GM12878 (cell line): ENCODE measurements at regions of chr2 and their contacts with region 1.

Region 1: DNA sequence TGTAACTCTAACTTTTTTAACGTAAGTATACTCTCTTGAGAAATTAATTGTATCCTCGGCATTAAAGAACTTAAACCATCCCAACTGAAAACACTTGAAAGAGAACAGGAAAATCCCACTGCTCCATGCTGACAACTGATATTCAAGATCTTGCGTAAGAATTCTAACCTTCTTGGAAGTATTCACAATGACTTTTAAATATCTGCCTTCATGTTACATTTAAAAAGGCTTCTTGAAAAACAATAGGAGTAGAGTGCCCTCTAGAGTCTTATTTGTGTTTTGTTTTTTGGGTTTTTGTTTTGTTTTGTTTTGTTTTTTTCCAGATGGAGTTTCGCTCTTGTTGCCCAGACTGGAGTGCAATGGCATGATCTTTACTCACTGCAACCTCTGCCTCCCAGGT is 65.4 kb upstream of the DNAJC10 start:
- DNase-seq: no peak
- ATAC-seq: peak; percentile 30
- H3K4me3 ChIP-seq: no peak overlapping the region
- H3K27ac ChIP-seq: no peak overlapping the region
- H3K4me1 ChIP-seq: no peaks in the 10 kb centered on the region
- H3K27me3 ChIP-seq: no peaks in the 10 kb centered on the region; a peak in 1 of 4 replicates
- CTCF ChIP-seq: peak; percentile 30 to 44 (median 43); a peak in 5 of 6 replicates
- EP300 ChIP-seq: no peak
- POLR2A ChIP-seq: no peak
- RAD21 ChIP-seq: peak; percentile 61

Region 2: DNA sequence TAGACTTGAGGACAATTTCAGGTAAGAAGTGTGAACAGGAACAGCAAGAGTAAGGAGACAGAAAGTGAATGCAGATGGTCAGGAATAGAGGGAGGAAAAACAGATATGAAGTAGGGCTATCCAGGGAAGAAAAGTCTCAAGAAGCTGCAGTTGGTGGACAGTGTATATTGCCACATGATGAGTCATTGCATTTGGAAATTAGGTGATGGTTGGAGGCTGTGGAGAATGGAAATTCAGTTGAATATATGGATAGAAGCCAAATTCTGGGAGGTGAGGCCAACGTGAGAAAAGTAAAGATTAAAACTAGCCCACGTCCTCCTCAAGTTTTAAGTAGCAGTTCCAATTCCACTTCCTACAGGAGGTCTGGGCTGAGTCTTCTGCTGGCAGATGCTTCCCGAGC is 1511.9 kb before region 1 on chr2:
- CTCF ChIA-PET with region 1: no interaction called
- POLR2A ChIA-PET with region 1: no interaction called
- RAD21 ChIA-PET with region 1: no interaction called
- SMC1A ChIA-PET with region 1: no interaction called
- in situ Hi-C with region 1: no loop called
- intact Hi-C with region 1: no loop called
- DNase-seq: no peak
- ATAC-seq: no peak
- H3K4me3 ChIP-seq: no peak overlapping the region
- H3K27ac ChIP-seq: no peak overlapping the region
- H3K4me1 ChIP-seq: no peaks in the 10 kb centered on the region
- H3K27me3 ChIP-seq: no peaks in the 10 kb centered on the region
- CTCF ChIP-seq: no peak
- EP300 ChIP-seq: no peak
- POLR2A ChIP-seq: no peak
- RAD21 ChIP-seq: no peak

Region 3: DNA sequence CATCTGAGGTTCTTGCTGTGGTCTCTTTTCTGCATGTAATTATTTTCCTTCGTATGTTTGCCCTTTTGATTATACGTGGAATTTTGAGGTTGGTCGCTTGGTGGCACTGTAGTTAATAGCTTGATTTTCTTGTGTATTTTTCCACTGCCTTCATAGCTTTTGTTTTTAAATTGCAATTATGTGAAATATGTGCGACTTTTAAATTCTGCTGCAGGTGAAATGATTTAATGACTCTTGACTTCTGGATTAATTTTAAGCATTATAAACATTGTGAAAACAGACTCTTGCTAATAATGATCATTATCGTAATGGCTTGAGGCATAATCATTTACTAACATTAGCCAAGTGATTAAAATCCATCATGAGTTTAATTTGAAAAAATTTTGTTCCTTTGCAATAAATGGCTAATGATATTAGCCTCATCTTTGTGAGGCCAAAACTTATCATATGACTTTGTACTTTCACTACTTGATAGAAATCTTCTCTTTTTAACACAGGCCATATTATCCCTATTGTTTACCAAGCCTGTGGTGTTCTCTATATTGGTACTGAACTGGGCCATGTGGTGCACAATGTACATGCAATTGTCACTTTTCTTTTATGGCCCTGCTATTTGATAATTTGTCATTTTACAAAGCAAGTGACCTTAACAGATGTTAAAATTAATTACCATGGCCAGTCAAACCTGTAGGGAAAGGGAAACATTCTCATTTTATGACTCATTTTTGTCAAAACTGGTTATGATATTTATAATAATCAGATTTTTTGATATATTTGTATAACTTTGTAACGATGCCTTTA is 907.6 kb before region 1 on chr2:
- CTCF ChIA-PET with region 1: no interaction called
- POLR2A ChIA-PET with region 1: no interaction called
- RAD21 ChIA-PET with region 1: interaction called, 4 read pairs
- SMC1A ChIA-PET with region 1: no interaction called
- in situ Hi-C with region 1: loop called (anchors 10 kb)
- intact Hi-C with region 1: loop called (anchors 5 kb)
- DNase-seq: peak; percentile 17
- ATAC-seq: peak; percentile 58
- H3K4me3 ChIP-seq: no peak overlapping the region
- H3K27ac ChIP-seq: no peak overlapping the region
- H3K4me1 ChIP-seq: no peaks in the 10 kb centered on the region
- H3K27me3 ChIP-seq: no peaks in the 10 kb centered on the region
- CTCF ChIP-seq: peak; percentile 47 to 72 (median 53); a peak in 5 of 6 replicates
- EP300 ChIP-seq: no peak
- POLR2A ChIP-seq: no peak
- RAD21 ChIP-seq: peak; percentile 83

Region 4: GRCh38 chr2:181977661-181978350 is 672.9 kb before region 1 on chr2:
- CTCF ChIA-PET with region 1: no interaction called
- POLR2A ChIA-PET with region 1: no interaction called
- RAD21 ChIA-PET with region 1: no interaction called
- SMC1A ChIA-PET with region 1: no interaction called
- in situ Hi-C with region 1: no loop called
- intact Hi-C with region 1: loop called (anchors 10 kb)
- DNase-seq: no peak
- ATAC-seq: peak; percentile 67
- H3K4me3 ChIP-seq: no peak overlapping the region
- H3K27ac ChIP-seq: no peak overlapping the region
- H3K4me1 ChIP-seq: no peaks in the 10 kb centered on the region
- H3K27me3 ChIP-seq: no peaks in the 10 kb centered on the region; a peak in 1 of 4 replicates
- CTCF ChIP-seq: no peak
- EP300 ChIP-seq: no peak
- POLR2A ChIP-seq: no peak
- RAD21 ChIP-seq: no peak

Region 5: DNA sequence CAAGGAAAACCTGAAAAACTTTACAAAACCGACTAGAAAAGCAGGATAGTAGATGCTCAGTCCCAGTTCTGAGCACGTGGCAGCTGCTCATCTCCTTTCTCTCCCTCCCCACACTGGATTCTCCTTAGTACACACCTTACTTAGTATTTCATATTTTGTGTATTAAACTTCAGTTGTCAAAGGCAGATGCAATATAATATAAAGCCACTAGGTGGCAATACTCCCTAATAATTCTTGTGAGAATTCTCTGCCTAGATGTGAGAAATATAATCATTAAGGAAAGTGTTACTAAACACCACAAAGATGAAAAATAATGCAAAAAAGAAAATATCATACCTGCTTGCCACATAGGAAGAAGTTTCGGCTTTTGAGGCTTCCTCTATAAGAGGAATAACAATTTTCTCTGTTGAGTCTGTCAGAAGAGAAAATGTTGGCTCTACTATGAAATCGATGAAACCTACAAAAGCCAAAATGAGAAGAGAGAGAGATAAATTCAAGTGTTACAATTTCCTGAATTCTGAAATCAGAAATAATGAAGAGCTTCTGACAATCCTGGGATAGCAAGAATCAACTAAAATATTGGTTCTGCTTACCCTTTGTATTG is 464.5 kb before region 1 on chr2:
- CTCF ChIA-PET with region 1: interaction called, 66 read pairs
- POLR2A ChIA-PET with region 1: interaction called, 3 read pairs
- RAD21 ChIA-PET with region 1: interaction called, 24 read pairs
- SMC1A ChIA-PET with region 1: interaction called, 33 read pairs
- in situ Hi-C with region 1: loop called (anchors 5 kb)
- intact Hi-C with region 1: loop called (anchors 1 kb)
- DNase-seq: no peak
- ATAC-seq: peak; percentile 75
- H3K4me3 ChIP-seq: no peak overlapping the region
- H3K27ac ChIP-seq: no peak overlapping the region
- H3K4me1 ChIP-seq: no peaks in the 10 kb centered on the region
- H3K27me3 ChIP-seq: no peaks in the 10 kb centered on the region
- CTCF ChIP-seq: peak; percentile 19 to 70 (median 51); a peak in 5 of 6 replicates
- EP300 ChIP-seq: no peak
- POLR2A ChIP-seq: no peak
- RAD21 ChIP-seq: peak; percentile 79

Region 6: DNA sequence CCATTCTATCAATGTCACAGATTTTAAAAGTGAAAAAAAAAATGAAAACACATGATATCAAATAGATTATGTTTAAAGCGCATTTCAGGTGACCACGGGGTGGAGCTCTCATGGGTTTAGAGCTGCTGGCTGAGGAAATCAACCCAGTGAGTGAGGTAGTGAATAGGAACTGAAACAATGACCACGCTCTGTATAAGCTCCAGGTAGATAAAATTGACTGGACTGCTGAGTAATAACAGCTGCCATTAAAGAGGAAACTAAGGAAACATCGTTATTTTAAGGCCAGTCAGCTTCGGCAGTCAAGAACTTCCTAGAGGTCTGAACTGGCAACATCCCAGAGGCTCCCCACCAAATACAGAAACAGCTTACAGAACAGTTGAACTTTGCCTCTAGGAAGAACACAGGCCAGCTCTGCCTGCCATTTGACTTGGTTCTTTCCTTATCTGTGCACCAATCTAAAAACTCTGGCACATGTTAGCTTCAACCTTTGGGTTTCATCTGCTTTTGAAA is 409.8 kb before region 1 on chr2:
- CTCF ChIA-PET with region 1: interaction called, 88 read pairs
- POLR2A ChIA-PET with region 1: no interaction called
- RAD21 ChIA-PET with region 1: interaction called, 31 read pairs
- SMC1A ChIA-PET with region 1: interaction called, 58 read pairs
- in situ Hi-C with region 1: loop called (anchors 5 kb)
- intact Hi-C with region 1: loop called (anchors 1 kb)
- DNase-seq: peak; percentile 62
- ATAC-seq: peak; percentile 100
- H3K4me3 ChIP-seq: no peak overlapping the region
- H3K27ac ChIP-seq: no peak overlapping the region
- H3K4me1 ChIP-seq: peaks cover 5% of the 10 kb centered on the region; the same call in 1 of the 2 replicates
- H3K27me3 ChIP-seq: no peaks in the 10 kb centered on the region
- CTCF ChIP-seq: peak; percentile 57 to 70 (median 60)
- EP300 ChIP-seq: peak in 1 of 2 experiments; percentile 36; a peak in 1 of 4 replicates
- POLR2A ChIP-seq: no peak
- RAD21 ChIP-seq: peak; percentile 64

Region 7: DNA sequence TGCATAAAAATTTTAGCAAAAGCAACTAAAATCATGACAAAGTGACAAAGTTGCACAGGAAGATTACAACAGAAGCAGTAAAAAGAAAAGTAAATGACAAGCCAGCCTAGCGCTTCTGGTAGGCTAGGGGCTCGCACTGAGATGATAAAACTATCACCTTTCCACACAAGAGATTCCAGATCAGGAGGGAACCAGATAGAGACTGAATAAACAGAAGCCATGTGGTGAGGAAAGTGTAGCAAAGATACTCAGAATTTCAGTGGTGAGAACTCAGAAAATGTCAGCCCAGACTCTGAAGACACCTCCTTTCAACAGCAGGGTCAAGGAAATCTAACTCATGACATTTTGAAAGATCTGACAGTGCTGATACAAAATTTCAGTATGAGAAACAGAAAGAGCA is 12.0 kb before region 1 on chr2:
- CTCF ChIA-PET with region 1: interaction called, 11 read pairs
- POLR2A ChIA-PET with region 1: no interaction called
- RAD21 ChIA-PET with region 1: interaction called, 5 read pairs
- SMC1A ChIA-PET with region 1: interaction called, 6 read pairs
- in situ Hi-C with region 1: no loop called
- intact Hi-C with region 1: no loop called
- DNase-seq: no peak
- ATAC-seq: no peak
- H3K4me3 ChIP-seq: no peak overlapping the region
- H3K27ac ChIP-seq: no peak overlapping the region
- H3K4me1 ChIP-seq: no peaks in the 10 kb centered on the region
- H3K27me3 ChIP-seq: no peaks in the 10 kb centered on the region
- CTCF ChIP-seq: no peak
- EP300 ChIP-seq: no peak
- POLR2A ChIP-seq: no peak
- RAD21 ChIP-seq: no peak

Region 8: DNA sequence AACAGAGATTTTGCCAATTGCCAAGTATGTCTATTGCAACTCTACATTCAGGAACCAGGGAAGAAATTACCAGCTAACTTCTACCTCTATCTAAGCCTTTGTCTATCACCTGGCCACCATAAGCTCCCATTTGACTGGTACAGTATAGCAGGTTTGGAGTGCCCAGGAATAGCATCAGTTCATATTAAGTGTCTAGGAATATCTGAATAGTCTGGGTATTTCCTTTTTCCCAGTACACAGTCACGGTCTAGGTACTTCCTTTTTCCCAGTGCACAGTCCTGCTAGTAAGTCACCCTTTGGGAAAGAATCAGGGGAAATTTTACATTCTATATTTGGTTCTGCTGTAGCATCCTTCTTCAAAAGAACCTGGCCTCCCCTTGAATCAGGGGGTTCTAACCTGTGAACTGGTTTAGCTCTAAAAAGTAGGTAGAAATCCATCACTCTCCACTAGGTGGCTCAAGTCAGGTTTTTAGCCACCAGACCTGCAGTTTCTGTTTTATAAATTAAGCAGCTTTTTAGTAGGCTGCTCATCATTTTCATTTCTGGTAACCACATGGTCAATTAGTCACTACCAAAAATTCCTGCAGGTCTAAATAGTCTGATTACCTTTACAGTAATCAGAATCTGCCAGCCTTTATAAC is 16.1 kb after region 1 on chr2:
- CTCF ChIA-PET with region 1: interaction called, 11 read pairs
- POLR2A ChIA-PET with region 1: no interaction called
- RAD21 ChIA-PET with region 1: no interaction called
- SMC1A ChIA-PET with region 1: interaction called, 3 read pairs
- in situ Hi-C with region 1: no loop called
- intact Hi-C with region 1: no loop called
- DNase-seq: no peak
- ATAC-seq: peak; percentile 89
- H3K4me3 ChIP-seq: no peak overlapping the region
- H3K27ac ChIP-seq: no peak overlapping the region
- H3K4me1 ChIP-seq: no peaks in the 10 kb centered on the region
- H3K27me3 ChIP-seq: peaks cover 0 to 1% of the 10 kb centered on the region in 2 experiments; a peak in 2 of 4 replicates
- CTCF ChIP-seq: peak; percentile 43 to 64 (median 55); a peak in 5 of 6 replicates
- EP300 ChIP-seq: no peak
- POLR2A ChIP-seq: no peak
- RAD21 ChIP-seq: peak; percentile 67

Region 9: DNA sequence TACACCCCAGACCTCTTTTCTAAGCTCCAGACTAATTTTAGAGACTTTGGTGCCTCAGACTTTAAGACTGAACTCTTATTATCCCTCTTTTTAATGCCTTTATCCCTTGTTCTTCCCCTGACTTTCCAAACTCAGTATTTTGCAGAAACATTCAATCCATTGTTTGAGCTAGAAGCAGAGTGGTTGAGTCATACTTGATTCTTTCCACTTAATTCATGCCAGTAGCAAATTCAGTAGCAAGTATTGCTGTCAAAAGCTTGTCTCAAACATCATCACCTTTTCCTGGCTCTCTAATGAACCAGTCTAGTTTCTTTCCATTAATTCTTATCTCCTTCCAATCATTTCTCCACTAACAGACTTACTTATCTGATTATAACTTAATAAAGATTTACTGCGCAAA is 1247.9 kb after region 1 on chr2:
- CTCF ChIA-PET with region 1: no interaction called
- POLR2A ChIA-PET with region 1: no interaction called
- RAD21 ChIA-PET with region 1: no interaction called
- SMC1A ChIA-PET with region 1: no interaction called
- in situ Hi-C with region 1: no loop called
- intact Hi-C with region 1: no loop called
- DNase-seq: no peak
- ATAC-seq: no peak
- H3K4me3 ChIP-seq: no peak overlapping the region
- H3K27ac ChIP-seq: no peak overlapping the region
- H3K4me1 ChIP-seq: no peaks in the 10 kb centered on the region
- H3K27me3 ChIP-seq: no peaks in the 10 kb centered on the region
- CTCF ChIP-seq: no peak
- EP300 ChIP-seq: no peak
- POLR2A ChIP-seq: no peak
- RAD21 ChIP-seq: no peak